ENCODE measurements at regions of chr12 and their contacts with region 1.

Region 1: GRCh38 chr12:59164991-59165718 is 244.9 kb upstream of the LRIG3 start:
- DNase-seq: no peak
- H3K4me3 ChIP-seq: no peak overlapping the region
- H3K27ac ChIP-seq: no peak overlapping the region
- H3K4me1 ChIP-seq: no peaks in the 10 kb centered on the region
- H3K27me3 ChIP-seq: no peaks in the 10 kb centered on the region
- CTCF ChIP-seq: peak; percentile 39 to 55 (median 53)
- EP300 ChIP-seq: no peak
- POLR2A ChIP-seq: no peak

Region 2: GRCh38 chr12:57983146-57983857 is 1181.9 kb before region 1 on chr12:
- intact Hi-C with region 1: loop called (anchors 10 kb)
- DNase-seq: no peak
- H3K4me3 ChIP-seq: no peak overlapping the region
- H3K27ac ChIP-seq: no peak overlapping the region
- H3K4me1 ChIP-seq: peaks cover 7 to 22% (median 15%) of the 10 kb centered on the region in 4 donors
- H3K27me3 ChIP-seq: no peaks in the 10 kb centered on the region
- CTCF ChIP-seq: peak; percentile 57 to 70 (median 70)
- EP300 ChIP-seq: no peak
- POLR2A ChIP-seq: no peak

Region 3: GRCh38 chr12:59046763-59047534 is 118.2 kb before region 1 on chr12:
- intact Hi-C with region 1: no loop called
- DNase-seq: no peak
- H3K4me3 ChIP-seq: no peak overlapping the region
- H3K27ac ChIP-seq: no peak overlapping the region
- H3K4me1 ChIP-seq: peaks cover 0 to 3% (median 2%) of the 10 kb centered on the region in 4 donors
- H3K27me3 ChIP-seq: no peaks in the 10 kb centered on the region
- CTCF ChIP-seq: no peak
- EP300 ChIP-seq: no peak
- POLR2A ChIP-seq: no peak

Measured in esophagus muscularis mucosa (tissue), 4 donors.